Natural killer cell (primary cell): ENCODE measurements at regions of chr3 and their contacts with region 1.

Region 1: GRCh38 chr3:107235928-107236315 is 141.3 kb upstream of the CCDC54 start:
- DNase-seq: peak in 1 of 2 donors; percentile 84
- ATAC-seq: peak; percentile 70 to 76 (median 75)
- H3K4me3 ChIP-seq: no peak overlapping the region
- H3K4me3 Mint-ChIP-seq: peak overlapping the region; percentile 77
- H3K27ac ChIP-seq: no peak overlapping the region
- H3K27ac Mint-ChIP-seq: no peak overlapping the region
- H3K4me1 ChIP-seq: peaks cover 10% of the 10 kb centered on the region
- H3K4me1 Mint-ChIP-seq: peaks cover 11 to 17% of the 10 kb centered on the region in 2 donors
- H3K27me3 ChIP-seq: peaks cover under 1% of the 10 kb centered on the region
- H3K27me3 Mint-ChIP-seq: peaks cover 25 to 40% of the 10 kb centered on the region in 2 donors
- CTCF ChIP-seq: peak; percentile 85

Region 2: DNA sequence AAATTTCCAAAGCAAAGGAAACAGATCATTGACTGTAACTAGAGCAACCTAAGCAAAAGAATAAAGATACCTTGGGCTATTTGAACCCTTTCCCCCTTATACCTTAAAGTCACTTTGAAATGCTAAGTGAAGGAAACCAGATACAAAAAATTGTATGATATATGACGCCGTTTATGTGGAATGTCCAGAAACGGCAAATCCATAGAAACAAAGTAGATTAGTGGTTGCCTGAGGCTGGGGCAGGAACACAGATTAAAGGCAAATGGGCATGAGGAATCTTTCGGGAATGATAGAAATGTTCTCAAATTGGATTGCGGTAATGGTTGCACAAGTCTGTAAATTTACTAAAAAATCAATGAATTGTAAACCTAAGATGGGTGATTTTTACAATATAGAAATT is 18.8 kb before region 1 on chr3:
- intact Hi-C with region 1: no loop called
- DNase-seq: no peak
- ATAC-seq: no peak
- H3K4me3 ChIP-seq: no peak overlapping the region
- H3K4me3 Mint-ChIP-seq: no peak overlapping the region
- H3K27ac ChIP-seq: no peak overlapping the region
- H3K27ac Mint-ChIP-seq: no peak overlapping the region
- H3K4me1 ChIP-seq: no peaks in the 10 kb centered on the region
- H3K4me1 Mint-ChIP-seq: no peaks in the 10 kb centered on the region
- H3K27me3 ChIP-seq: no peaks in the 10 kb centered on the region
- H3K27me3 Mint-ChIP-seq: peaks cover 3 to 13% of the 10 kb centered on the region in 2 donors
- CTCF ChIP-seq: no peak

Region 3: GRCh38 chr3:107264888-107265287 is 29.0 kb after region 1 on chr3:
- intact Hi-C with region 1: no loop called
- DNase-seq: no peak
- ATAC-seq: no peak
- H3K4me3 ChIP-seq: no peak overlapping the region
- H3K4me3 Mint-ChIP-seq: no peak overlapping the region
- H3K27ac ChIP-seq: no peak overlapping the region
- H3K27ac Mint-ChIP-seq: no peak overlapping the region
- H3K4me1 ChIP-seq: no peaks in the 10 kb centered on the region
- H3K4me1 Mint-ChIP-seq: peaks cover 0 to 6% of the 10 kb centered on the region in 2 donors
- H3K27me3 ChIP-seq: no peaks in the 10 kb centered on the region
- H3K27me3 Mint-ChIP-seq: peaks cover 6 to 9% of the 10 kb centered on the region in 2 donors
- CTCF ChIP-seq: no peak

Region 4: DNA sequence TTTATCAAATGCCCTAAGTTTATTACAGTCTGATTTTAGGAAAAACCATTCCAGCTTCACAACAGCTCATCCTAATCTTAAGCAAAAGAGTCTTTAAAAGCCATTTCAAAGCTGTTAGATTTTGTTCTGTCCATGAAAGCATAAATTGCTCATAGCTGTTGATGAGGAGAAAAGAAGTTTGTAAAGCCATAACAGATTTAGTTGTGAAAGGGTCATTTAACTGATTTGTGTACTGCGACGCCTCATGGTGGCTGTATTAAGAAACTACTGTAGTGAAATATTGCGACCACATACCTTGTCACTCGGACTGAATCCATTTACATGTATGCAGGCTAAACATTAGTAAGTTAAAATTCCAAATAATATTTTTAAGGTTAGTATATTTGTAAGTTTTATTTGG is 307.7 kb after region 1 on chr3:
- intact Hi-C with region 1: loop called (anchors 2 kb)
- DNase-seq: peak in 1 of 2 donors; percentile 52
- ATAC-seq: no peak
- H3K4me3 ChIP-seq: no peak overlapping the region
- H3K4me3 Mint-ChIP-seq: no peak overlapping the region
- H3K27ac ChIP-seq: no peak overlapping the region
- H3K27ac Mint-ChIP-seq: no peak overlapping the region
- H3K4me1 ChIP-seq: no peaks in the 10 kb centered on the region
- H3K4me1 Mint-ChIP-seq: peaks cover 29 to 31% of the 10 kb centered on the region in 2 donors
- H3K27me3 ChIP-seq: no peaks in the 10 kb centered on the region
- H3K27me3 Mint-ChIP-seq: no peaks in the 10 kb centered on the region
- CTCF ChIP-seq: peak; percentile 18

Region 5: DNA sequence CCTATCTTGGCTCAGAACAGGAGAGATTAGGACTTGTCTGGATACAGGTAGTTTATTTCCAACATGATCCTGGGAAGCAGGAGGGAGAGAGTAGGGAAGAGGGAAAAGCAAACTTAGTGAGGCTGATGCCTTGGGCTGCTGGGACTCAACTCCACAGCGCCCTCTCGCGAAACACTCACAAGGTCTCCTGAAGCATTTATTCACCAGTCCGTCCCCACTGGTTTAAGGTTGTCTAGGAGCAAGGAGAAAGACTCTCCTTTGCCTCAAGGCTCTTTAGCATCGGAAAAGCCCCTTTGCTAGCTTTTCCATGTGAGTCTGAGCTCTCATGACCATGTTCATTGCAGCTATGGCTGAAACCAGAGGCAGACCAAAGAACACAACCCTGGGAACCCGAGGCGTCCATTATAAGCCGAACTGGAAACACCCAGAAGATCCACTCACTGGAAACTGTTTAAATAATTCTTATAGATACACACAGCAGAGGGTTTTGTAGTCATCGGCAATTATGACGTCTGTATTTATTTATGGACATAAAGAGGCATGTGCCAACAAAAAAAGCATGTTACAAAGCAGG is 610.4 kb after region 1 on chr3:
- intact Hi-C with region 1: loop called (anchors 10 kb)
- DNase-seq: peak in 1 of 2 donors; percentile 58
- ATAC-seq: no peak
- H3K4me3 ChIP-seq: no peak overlapping the region
- H3K4me3 Mint-ChIP-seq: no peak overlapping the region
- H3K27ac ChIP-seq: no peak overlapping the region
- H3K27ac Mint-ChIP-seq: no peak overlapping the region
- H3K4me1 ChIP-seq: no peaks in the 10 kb centered on the region
- H3K4me1 Mint-ChIP-seq: no peaks in the 10 kb centered on the region
- H3K27me3 ChIP-seq: no peaks in the 10 kb centered on the region
- H3K27me3 Mint-ChIP-seq: peaks cover 5 to 7% of the 10 kb centered on the region in 2 donors
- CTCF ChIP-seq: peak; percentile 42

Region 6: DNA sequence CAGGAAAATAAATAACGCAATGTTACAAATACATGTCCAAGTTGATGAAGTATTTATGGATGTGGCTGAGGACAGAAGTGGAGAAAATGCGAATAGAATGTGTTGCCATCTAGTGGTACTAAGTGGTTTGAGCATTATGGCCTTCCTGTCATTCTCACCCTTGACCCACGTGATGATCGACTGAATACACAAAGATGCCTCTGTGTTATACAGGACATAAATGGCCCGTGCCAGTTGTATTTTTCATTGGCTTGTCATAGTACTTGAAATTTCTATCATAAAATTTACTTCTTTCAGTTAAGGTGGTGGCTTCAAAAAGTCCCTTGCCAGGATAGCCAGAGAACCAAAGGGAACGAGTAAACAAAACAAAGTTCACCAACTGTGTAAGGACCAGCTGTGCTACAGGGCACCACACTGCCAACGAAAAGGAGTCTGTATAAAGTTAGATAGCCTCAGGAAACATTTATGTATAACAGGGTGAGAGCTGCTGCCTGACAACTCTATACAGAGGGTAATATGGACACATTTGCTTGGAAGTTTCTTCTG is 1170.8 kb after region 1 on chr3:
- intact Hi-C with region 1: loop called (anchors 10 kb)
- DNase-seq: peak in 1 of 2 donors; percentile 79
- ATAC-seq: peak; percentile 92 to 99 (median 99)
- H3K4me3 ChIP-seq: no peak overlapping the region
- H3K4me3 Mint-ChIP-seq: no peak overlapping the region
- H3K27ac ChIP-seq: no peak overlapping the region
- H3K27ac Mint-ChIP-seq: peak overlapping the region in 1 of 2 donors; percentile 24
- H3K4me1 ChIP-seq: no peaks in the 10 kb centered on the region
- H3K4me1 Mint-ChIP-seq: peaks cover 6% of the 10 kb centered on the region in 2 donors
- H3K27me3 ChIP-seq: no peaks in the 10 kb centered on the region
- H3K27me3 Mint-ChIP-seq: peaks cover 0 to 5% of the 10 kb centered on the region in 2 donors
- CTCF ChIP-seq: peak; percentile 70